ENCODE measurements at regions of chr2 and their contacts with region 1.

Region 1: DNA sequence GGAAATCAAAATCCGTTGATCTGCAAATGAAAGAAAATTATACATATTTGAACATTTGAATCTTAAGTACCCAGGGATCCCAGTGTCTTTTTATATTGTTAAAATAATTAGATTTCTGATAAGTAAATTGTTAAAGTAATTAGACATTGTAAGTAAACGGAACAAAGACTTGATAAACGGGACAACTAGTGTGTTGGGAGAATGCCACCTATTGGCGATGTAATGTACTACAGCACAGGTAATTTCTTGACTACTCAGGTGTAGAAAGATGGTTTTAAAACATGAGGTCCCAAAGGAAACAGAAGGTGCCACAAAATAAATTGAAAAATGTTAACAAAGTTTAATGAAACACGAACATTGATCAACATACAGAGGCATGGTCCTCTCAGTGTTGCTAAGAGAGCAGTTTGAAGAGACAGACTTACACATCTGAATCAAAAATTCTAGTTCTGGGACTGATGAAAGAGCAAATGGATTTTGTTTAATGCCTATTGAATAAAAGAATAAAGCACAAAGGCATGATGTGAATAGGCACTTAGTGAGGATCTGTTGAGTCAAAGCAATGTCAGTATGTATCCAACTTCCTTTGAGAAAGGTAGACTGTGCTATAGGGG is 103.4 kb upstream of the RASGRP3 start:
- DNase-seq: peak; percentile 43
- H3K4me3 ChIP-seq: no peak overlapping the region
- H3K27ac ChIP-seq: no peak overlapping the region
- H3K4me1 ChIP-seq: no peaks in the 10 kb centered on the region
- H3K27me3 ChIP-seq: no peaks in the 10 kb centered on the region
- CTCF ChIP-seq: peak; percentile 76 to 81

Region 2: GRCh38 chr2:32772638-32773447 is 600.2 kb before region 1 on chr2:
- CTCF ChIA-PET with region 1: no interaction called
- dilution Hi-C with region 1: no loop called
- in situ Hi-C with region 1: no loop called
- intact Hi-C with region 1: loop called (anchors 2 kb)
- DNase-seq: peak; percentile 19
- H3K4me3 ChIP-seq: no peak overlapping the region
- H3K27ac ChIP-seq: no peak overlapping the region
- H3K4me1 ChIP-seq: no peaks in the 10 kb centered on the region
- H3K27me3 ChIP-seq: no peaks in the 10 kb centered on the region
- CTCF ChIP-seq: peak; percentile 36 to 66

Region 3: GRCh38 chr2:33284287-33284686 is 88.8 kb before region 1 on chr2:
- CTCF ChIA-PET with region 1: no interaction called
- dilution Hi-C with region 1: loop called (anchors 5 kb)
- in situ Hi-C with region 1: no loop called
- intact Hi-C with region 1: no loop called
- DNase-seq: no peak
- H3K4me3 ChIP-seq: no peak overlapping the region
- H3K27ac ChIP-seq: no peak overlapping the region
- H3K4me1 ChIP-seq: no peaks in the 10 kb centered on the region
- H3K27me3 ChIP-seq: no peaks in the 10 kb centered on the region
- CTCF ChIP-seq: no peak

Measured in mammary epithelial cell (primary cell).